ENCODE measurements at regions of chr1 and their contacts with region 1.

Region 1: DNA sequence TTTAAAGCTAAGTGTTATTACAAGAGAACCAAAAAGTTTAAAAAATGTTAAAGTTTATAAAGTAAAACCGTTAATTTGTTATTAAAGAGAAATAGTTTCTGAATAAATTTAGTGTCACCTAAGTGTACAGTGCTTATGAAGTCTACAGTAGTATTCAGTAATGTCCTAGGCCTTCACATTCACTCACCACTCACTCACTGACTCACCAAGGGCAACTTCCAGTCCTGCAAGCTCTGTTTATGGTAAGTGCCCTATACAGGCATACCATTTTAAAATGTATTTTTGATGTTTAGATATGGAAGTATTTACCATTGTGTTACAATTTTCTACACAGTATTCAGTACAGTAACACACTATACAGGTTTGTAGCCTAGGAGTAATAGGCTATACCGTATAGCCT is 60.1 kb upstream of the GCLM start:
- DNase-seq: peak; percentile 58
- ATAC-seq: peak; percentile 62
- H3K4me3 ChIP-seq: no peak overlapping the region
- H3K27ac ChIP-seq: no peak overlapping the region
- H3K4me1 ChIP-seq: peaks cover 8% of the 10 kb centered on the region
- H3K27me3 ChIP-seq: no peaks in the 10 kb centered on the region; the same call in 1 of the 2 replicates
- CTCF ChIP-seq: no peak
- POLR2A ChIP-seq: no peak
- RAD21 ChIP-seq: no peak

Region 2: DNA sequence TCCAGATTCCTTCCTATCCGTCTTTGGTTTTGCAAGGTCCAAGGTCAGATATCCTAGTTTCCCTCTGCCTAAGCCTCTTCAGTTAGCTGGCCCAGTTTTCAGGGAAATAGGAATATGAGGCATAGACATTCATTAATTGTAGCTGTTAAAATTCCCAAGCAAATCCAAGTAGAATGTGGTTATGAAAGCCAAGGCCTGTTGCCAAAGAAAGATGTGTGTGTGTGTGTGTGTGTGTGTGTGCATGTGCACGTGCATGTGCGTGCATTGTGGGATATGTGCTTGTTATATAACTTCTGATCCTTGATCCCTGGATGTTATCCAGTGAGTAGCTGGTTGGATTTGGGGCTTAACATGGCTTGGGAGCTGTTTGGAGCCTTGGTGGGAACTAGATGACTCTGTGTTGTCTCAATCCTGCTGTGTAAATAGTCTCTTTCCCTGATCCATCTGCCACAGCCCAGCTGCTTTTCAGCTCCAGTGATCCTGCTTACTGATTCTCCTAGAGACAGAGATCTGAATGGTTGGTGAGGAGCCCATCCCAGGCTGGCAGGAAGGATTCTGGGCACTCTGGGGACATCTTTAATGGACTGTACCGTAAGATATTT is 10.4 kb after region 1 on chr1:
- CTCF ChIA-PET with region 1: interaction called, 4 read pairs
- POLR2A ChIA-PET with region 1: no interaction called
- dilution Hi-C with region 1: no loop called
- in situ Hi-C with region 1: no loop called
- intact Hi-C with region 1: loop called (anchors 1 kb)
- DNase-seq: peak; percentile 69
- ATAC-seq: peak; percentile 67
- H3K4me3 ChIP-seq: no peak overlapping the region
- H3K27ac ChIP-seq: peak overlapping the region; percentile 83; the same call in 1 of the 2 replicates
- H3K4me1 ChIP-seq: peaks cover 22% of the 10 kb centered on the region
- H3K27me3 ChIP-seq: peaks cover 6% of the 10 kb centered on the region; the same call in 1 of the 2 replicates
- CTCF ChIP-seq: no peak
- POLR2A ChIP-seq: no peak
- RAD21 ChIP-seq: no peak

Region 3: DNA sequence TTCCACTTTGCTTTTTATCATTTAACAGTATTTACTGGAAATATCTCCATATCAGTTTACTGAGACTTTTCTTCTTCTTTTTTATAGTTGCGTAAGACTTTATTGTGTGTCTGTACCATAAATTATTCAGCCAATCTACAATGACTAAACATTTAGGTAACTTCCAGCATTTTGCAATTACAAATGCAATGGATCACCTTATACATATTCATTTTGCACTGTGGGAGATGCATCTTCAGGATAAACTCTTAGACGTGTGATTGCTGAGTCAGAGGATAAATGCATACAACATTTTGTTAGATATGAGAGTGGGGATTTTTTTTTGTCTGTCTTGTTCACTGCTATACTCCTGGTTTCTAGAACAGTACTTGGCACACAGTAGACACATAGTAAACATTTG is 35.6 kb after region 1 on chr1:
- CTCF ChIA-PET with region 1: no interaction called
- POLR2A ChIA-PET with region 1: no interaction called
- dilution Hi-C with region 1: no loop called
- in situ Hi-C with region 1: no loop called
- intact Hi-C with region 1: no loop called
- DNase-seq: peak; percentile 74
- ATAC-seq: peak; percentile 60
- H3K4me3 ChIP-seq: no peak overlapping the region
- H3K27ac ChIP-seq: peak overlapping the region; percentile 36; the same call in 1 of the 2 replicates
- H3K4me1 ChIP-seq: peaks cover 3% of the 10 kb centered on the region; the same call in 1 of the 2 replicates
- H3K27me3 ChIP-seq: no peaks in the 10 kb centered on the region; the same call in 1 of the 2 replicates
- CTCF ChIP-seq: no peak
- POLR2A ChIP-seq: no peak
- RAD21 ChIP-seq: no peak

Region 4: DNA sequence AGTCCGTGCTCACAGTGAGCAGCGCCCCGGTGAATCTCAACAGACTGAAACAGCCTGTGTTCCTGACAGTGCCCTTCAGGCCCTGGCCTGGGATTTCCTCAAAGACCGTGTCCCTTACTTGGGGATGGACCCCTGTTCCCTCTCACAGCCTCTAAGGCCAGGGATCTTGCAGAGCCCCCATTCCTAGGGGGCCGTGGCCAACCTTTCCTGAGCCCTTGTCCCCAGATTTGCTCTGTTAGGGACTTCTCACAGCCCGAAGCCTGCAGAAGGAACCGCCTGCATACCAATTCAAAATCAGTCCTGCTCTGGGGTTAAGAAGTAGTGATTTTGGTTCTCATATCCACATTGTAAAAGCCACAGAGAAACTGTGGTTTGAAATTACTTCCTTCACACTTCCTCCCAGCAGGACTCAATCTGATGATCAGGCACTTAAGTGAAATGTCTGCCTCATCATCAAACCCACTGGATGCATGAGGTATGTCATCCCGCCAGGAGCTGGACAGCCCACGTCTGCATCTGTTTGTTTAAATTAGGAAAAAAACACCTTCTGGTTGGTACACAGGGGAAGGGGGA is 136.7 kb after region 1 on chr1:
- CTCF ChIA-PET with region 1: no interaction called
- POLR2A ChIA-PET with region 1: no interaction called
- dilution Hi-C with region 1: no loop called
- in situ Hi-C with region 1: no loop called
- intact Hi-C with region 1: no loop called
- DNase-seq: peak; percentile 46
- ATAC-seq: peak; percentile 29; the same call in 1 of the 2 replicates
- H3K4me3 ChIP-seq: no peak overlapping the region
- H3K27ac ChIP-seq: no peak overlapping the region
- H3K4me1 ChIP-seq: no peaks in the 10 kb centered on the region; the same call in 1 of the 2 replicates
- H3K27me3 ChIP-seq: peaks cover 17% of the 10 kb centered on the region
- CTCF ChIP-seq: no peak
- POLR2A ChIP-seq: no peak
- RAD21 ChIP-seq: no peak